ENCODE measurements at regions of chr3 and their contacts with region 1.

Region 1: GRCh38 chr3:111539351-111540331 is 2.4 kb upstream of the CD96 start:
- DNase-seq: peak; percentile 74
- ATAC-seq: peak; percentile 41
- H3K4me3 Mint-ChIP-seq: peak overlapping the region; percentile 67
- H3K27ac Mint-ChIP-seq: no peak overlapping the region
- H3K4me1 Mint-ChIP-seq: peaks cover 65% of the 10 kb centered on the region
- H3K27me3 Mint-ChIP-seq: no peaks in the 10 kb centered on the region
- CTCF ChIP-seq: peak; percentile 95

Region 2: DNA sequence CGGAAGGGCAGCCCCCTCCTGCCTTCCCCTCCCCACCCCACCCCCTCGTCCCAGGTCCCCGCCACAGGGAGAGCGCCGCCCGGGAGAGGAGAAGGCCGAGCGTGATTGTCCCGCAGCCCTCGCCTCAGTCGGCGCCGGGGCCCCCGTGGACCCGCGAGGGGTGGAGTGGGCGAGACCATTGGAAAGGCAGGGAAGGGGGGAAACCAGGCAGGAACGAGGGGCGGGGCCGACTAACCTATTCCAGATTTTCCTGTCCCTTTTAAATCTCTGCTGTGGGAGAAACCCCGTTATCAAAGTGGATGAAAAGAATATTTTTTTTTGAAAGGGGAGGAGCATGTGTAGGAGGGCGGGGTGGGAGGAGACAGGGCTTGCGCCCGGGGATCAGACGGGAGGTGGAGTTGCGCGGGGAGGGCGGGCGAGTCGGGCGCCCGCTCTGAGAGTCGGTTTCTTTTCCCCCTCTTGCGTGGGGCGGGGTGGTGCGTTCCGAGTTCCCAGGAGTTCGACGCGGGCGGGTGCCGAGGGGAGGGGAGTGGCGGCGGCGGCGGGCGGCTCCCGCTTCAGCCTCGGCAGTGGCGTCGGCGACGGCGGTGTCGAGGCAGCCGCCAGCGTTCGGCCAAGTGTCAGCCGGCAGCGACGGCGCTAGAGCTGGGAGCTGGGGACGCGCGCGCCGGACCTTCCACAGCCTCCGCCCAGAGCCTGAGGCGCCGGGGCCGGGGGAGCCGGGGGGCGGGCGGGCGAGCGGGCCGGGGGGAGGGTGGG is 468.2 kb before region 1 on chr3 and contains the start of gene NECTIN3:
- CTCF ChIA-PET with region 1: no interaction called
- POLR2A ChIA-PET with region 1: no interaction called
- intact Hi-C with region 1: loop called (anchors 5 kb)
- DNase-seq: peak; percentile 84
- ATAC-seq: peak; percentile 91
- H3K4me3 Mint-ChIP-seq: peak within 1 kb of the TSS; percentile 83
- H3K27ac Mint-ChIP-seq: peak within 1 kb of the TSS; percentile 80
- H3K4me1 Mint-ChIP-seq: peaks cover 28% of the 10 kb centered on the region
- H3K27me3 Mint-ChIP-seq: peaks cover 42% of the 10 kb centered on the region
- CTCF ChIP-seq: no peak
- total RNA-seq, gene NECTIN3: 3.0 to 4.3 TPM

Region 3: GRCh38 chr3:111338059-111338698 is 201.5 kb before region 1 on chr3:
- CTCF ChIA-PET with region 1: interaction called, 7 read pairs
- POLR2A ChIA-PET with region 1: no interaction called
- intact Hi-C with region 1: loop called (anchors 10 kb)
- DNase-seq: peak; percentile 60
- ATAC-seq: no peak
- H3K4me3 Mint-ChIP-seq: no peak overlapping the region
- H3K27ac Mint-ChIP-seq: no peak overlapping the region
- H3K4me1 Mint-ChIP-seq: peaks cover 17% of the 10 kb centered on the region
- H3K27me3 Mint-ChIP-seq: no peaks in the 10 kb centered on the region
- CTCF ChIP-seq: peak; percentile 73

Region 4: GRCh38 chr3:111610189-111610588 is 70.5 kb after region 1 on chr3:
- CTCF ChIA-PET with region 1: interaction called, 54 read pairs
- POLR2A ChIA-PET with region 1: interaction called, 13 read pairs
- intact Hi-C with region 1: loop called (anchors 2 kb)
- DNase-seq: peak; percentile 68
- ATAC-seq: peak; percentile 53
- H3K4me3 Mint-ChIP-seq: peak overlapping the region; percentile 63
- H3K27ac Mint-ChIP-seq: peak overlapping the region; percentile 93
- H3K4me1 Mint-ChIP-seq: peaks cover 96% of the 10 kb centered on the region
- H3K27me3 Mint-ChIP-seq: no peaks in the 10 kb centered on the region
- CTCF ChIP-seq: no peak

Measured in activated CD8-positive, alpha-beta T cell treated with anti-CD3 and anti-CD28 coated beads for 36 hours (primary cell).